ENCODE measurements at regions of chr19 and their contacts with region 1.

Region 1: DNA sequence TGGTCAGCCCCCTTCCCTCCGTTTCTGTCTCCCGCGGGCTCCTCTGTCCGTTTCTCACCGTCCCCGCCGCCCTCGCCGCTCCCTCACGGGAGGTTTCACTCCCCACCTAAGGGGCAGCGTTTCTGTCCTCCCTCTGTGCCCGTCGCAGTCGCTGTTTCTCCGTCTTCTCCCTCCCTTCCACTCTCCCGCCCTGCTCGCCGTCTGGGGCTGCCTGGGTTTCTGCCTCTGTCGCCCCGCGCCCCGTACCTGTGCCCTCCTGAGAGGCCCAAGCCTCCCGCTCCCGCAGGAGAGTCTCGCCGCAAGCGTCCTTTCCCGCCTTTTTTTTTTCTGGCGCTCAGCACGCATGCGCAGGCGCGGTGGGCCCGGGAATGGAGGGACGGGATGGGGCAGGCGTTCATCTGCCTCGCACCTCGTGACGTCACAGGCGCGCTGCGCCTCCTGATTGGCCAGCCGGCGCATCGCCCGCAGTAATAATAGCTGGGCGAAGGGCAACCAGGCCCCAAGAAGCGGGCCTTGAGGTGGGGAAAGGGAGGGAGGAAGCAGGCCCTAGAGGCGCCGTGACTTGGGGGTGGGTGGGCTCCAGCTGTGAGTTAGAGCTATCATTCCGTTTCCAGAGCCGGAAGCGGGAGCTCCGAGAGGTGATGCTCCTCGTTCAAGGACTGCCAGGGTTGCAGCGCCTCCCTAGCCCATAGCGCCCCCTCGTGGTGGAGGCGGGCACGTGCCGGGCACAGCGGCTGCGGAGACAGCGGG is 15.4 kb downstream of the SSC5D start:
- DNase-seq: peak; percentile 98
- H3K4me3 Mint-ChIP-seq: peak overlapping the region; percentile 85
- H3K27ac Mint-ChIP-seq: peak overlapping the region; percentile 84
- H3K4me1 Mint-ChIP-seq: peaks cover 20% of the 10 kb centered on the region
- H3K27me3 Mint-ChIP-seq: peaks cover 6% of the 10 kb centered on the region

Region 2: GRCh38 chr19:55141696-55142095 is 362.0 kb before region 1 on chr19:
- intact Hi-C with region 1: loop called (anchors 1 kb)
- DNase-seq: no peak
- H3K4me3 Mint-ChIP-seq: no peak overlapping the region
- H3K27ac Mint-ChIP-seq: no peak overlapping the region
- H3K4me1 Mint-ChIP-seq: peaks cover 10% of the 10 kb centered on the region
- H3K27me3 Mint-ChIP-seq: peaks cover 25% of the 10 kb centered on the region

Region 3: GRCh38 chr19:55301459-55302317 is 202.0 kb before region 1 on chr19:
- intact Hi-C with region 1: loop called (anchors 5 kb)
- DNase-seq: peak; percentile 99
- H3K4me3 Mint-ChIP-seq: peak overlapping the region; percentile 95
- H3K27ac Mint-ChIP-seq: peak overlapping the region; percentile 95
- H3K4me1 Mint-ChIP-seq: peaks cover 16% of the 10 kb centered on the region
- H3K27me3 Mint-ChIP-seq: no peaks in the 10 kb centered on the region

Region 4: GRCh38 chr19:55385740-55386529 is 117.7 kb before region 1 on chr19 and contains the start of gene RPL28:
- intact Hi-C with region 1: no loop called
- DNase-seq: peak; percentile 100
- H3K4me3 Mint-ChIP-seq: peak within 1 kb of the TSS; percentile 97
- H3K27ac Mint-ChIP-seq: peak within 1 kb of the TSS; percentile 98
- H3K4me1 Mint-ChIP-seq: peaks cover 52% of the 10 kb centered on the region
- H3K27me3 Mint-ChIP-seq: no peaks in the 10 kb centered on the region
- total RNA-seq, gene RPL28: 1,992 and 2,022 TPM in 2 replicates

Region 5: GRCh38 chr19:55467236-55468053 is 36.2 kb before region 1 on chr19:
- intact Hi-C with region 1: loop called (anchors 1 kb)
- DNase-seq: peak; percentile 93
- H3K4me3 Mint-ChIP-seq: no peak overlapping the region
- H3K27ac Mint-ChIP-seq: no peak overlapping the region
- H3K4me1 Mint-ChIP-seq: peaks cover 6% of the 10 kb centered on the region
- H3K27me3 Mint-ChIP-seq: no peaks in the 10 kb centered on the region

Region 6: GRCh38 chr19:55487632-55488152 is 16.0 kb before region 1 on chr19:
- intact Hi-C with region 1: no loop called
- DNase-seq: no peak
- H3K4me3 Mint-ChIP-seq: peak overlapping the region; percentile 24
- H3K27ac Mint-ChIP-seq: peak overlapping the region; percentile 74
- H3K4me1 Mint-ChIP-seq: peaks cover 8% of the 10 kb centered on the region
- H3K27me3 Mint-ChIP-seq: peaks cover 3% of the 10 kb centered on the region

Region 7: DNA sequence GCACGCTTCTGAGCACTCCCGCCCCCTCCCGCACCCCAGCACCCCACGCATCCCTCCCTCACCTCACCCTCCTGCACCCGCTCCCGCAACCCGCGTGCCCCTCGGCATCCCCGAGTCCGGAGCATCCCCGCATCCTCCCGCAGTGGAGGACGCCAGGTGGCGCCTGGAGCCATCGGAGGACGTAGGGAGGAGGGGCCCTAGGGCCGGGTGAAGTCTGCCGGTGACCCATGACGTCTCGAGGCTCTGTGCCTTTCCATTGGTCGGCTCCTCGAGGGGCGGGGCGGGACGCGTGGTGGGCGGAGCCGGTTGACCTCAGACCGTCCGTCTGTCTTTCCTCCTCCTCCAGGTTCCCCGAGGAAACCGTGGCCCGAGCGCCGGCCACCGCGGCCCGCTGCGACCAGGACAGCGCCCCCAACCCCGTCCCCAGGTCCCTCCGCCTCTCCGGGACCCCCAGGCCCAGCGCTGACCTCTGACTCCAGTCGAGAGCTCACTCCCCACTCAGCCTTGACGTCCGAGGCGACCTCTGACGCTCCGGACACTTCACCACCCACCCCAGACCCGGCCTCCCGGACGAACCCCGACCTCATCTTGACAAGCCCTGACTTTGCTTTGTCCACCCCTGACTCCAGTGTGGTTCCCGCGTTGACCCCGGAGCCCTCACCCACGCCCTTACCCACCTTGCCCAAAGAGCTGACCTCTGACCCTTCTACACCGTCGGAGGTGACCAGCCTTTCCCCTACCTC is 13.4 kb after region 1 on chr19:
- intact Hi-C with region 1: no loop called
- DNase-seq: peak; percentile 97
- H3K4me3 Mint-ChIP-seq: peak overlapping the region; percentile 72
- H3K27ac Mint-ChIP-seq: no peak overlapping the region
- H3K4me1 Mint-ChIP-seq: peaks cover 3% of the 10 kb centered on the region
- H3K27me3 Mint-ChIP-seq: peaks cover 3% of the 10 kb centered on the region